ENCODE measurements at regions of chr4 and their contacts with region 1.

Region 1: DNA sequence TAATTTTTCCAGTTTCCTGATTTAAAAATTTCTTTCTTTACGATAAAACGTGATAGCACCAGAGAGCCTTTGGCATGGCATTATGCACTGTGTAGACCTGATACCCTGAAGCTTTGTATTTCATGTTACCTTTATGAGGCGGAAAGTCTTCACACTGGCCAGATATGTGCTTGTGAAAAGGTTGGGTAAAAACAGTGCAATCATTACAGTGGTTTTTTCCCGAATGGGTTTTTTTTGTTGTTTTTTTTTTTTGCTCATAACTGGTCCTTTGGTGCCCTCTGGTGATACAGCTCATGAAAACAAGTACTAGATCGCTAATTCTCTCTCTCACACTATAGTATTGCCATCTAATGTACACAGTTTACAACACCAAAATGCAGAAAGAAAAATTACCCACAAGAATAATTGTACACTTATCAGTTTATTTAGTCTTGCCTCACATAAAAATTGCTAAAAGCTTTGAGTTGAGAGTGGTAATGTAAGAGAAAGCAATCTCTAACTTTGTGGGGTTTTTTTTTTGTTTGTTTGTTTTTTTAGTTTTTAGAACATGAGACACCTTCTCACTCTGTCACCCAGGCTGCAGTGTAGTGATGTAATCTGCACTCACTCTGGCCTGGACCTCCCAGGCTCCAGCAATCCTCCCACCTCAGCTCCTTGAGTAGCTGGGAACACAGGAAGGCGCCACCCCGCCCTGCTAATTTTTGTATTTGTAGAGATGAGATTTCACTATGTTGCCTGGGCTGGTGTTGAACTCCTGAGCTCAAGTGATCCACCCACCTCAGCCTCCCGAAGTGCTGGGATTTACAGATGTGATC is 21.3 kb downstream of the SPCS3 start:
- DNase-seq: no peak
- H3K4me3 ChIP-seq: no peak overlapping the region
- H3K27ac ChIP-seq: no peak overlapping the region
- H3K4me1 ChIP-seq: peaks cover 0 to 7% of the 10 kb centered on the region in 2 donors
- H3K27me3 ChIP-seq: no peaks in the 10 kb centered on the region
- CTCF ChIP-seq: peak in 4 of 6 experiments; percentile 19 to 65 (median 46)
- POLR2A ChIP-seq: no peak

Region 2: GRCh38 chr4:175947117-175947722 is 393.9 kb before region 1 on chr4:
- intact Hi-C with region 1: loop called (anchors 10 kb)
- DNase-seq: no peak
- H3K4me3 ChIP-seq: no peak overlapping the region
- H3K27ac ChIP-seq: no peak overlapping the region
- H3K4me1 ChIP-seq: no peaks in the 10 kb centered on the region
- H3K27me3 ChIP-seq: no peaks in the 10 kb centered on the region
- CTCF ChIP-seq: peak in 5 of 6 experiments; percentile 35 to 75 (median 52)
- POLR2A ChIP-seq: no peak

Region 3: DNA sequence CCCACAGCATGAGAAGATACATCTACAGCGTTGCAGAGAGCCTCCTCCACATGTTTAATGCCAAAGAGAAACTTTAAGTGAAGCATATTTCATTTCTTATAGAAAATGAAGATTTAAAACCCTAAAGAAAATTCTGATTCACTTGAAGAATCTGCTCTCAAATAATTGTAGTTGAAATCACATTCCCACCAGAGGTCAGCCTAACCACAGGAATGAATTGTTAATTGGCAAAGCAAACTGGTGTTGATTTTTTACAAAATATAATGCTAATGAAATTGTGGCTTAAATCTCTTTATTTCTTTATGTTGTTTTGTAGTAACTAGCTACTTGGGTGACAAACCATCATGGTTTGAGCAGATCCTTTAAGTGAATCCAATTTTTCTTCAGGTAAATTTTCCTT is 306.6 kb before region 1 on chr4:
- intact Hi-C with region 1: loop called (anchors 10 kb)
- DNase-seq: peak in 1 of 2 donors; percentile 9
- H3K4me3 ChIP-seq: no peak overlapping the region
- H3K27ac ChIP-seq: no peak overlapping the region
- H3K4me1 ChIP-seq: no peaks in the 10 kb centered on the region
- H3K27me3 ChIP-seq: no peaks in the 10 kb centered on the region
- CTCF ChIP-seq: peak in 4 of 6 experiments; percentile 39 to 71 (median 59)
- POLR2A ChIP-seq: no peak

Region 4: GRCh38 chr4:176479767-176480166 is 138.7 kb after region 1 on chr4:
- intact Hi-C with region 1: no loop called
- DNase-seq: no peak
- H3K4me3 ChIP-seq: no peak overlapping the region
- H3K27ac ChIP-seq: no peak overlapping the region
- H3K4me1 ChIP-seq: no peaks in the 10 kb centered on the region
- H3K27me3 ChIP-seq: no peaks in the 10 kb centered on the region
- CTCF ChIP-seq: no peak
- POLR2A ChIP-seq: no peak